ENCODE measurements at regions of chr12 and their contacts with region 1.

Region 1: GRCh38 chr12:75480469-75480949 is at the start of gene GLIPR1:
- DNase-seq: peak; percentile 83
- ATAC-seq: peak; percentile 83
- H3K4me3 Mint-ChIP-seq: peak within 1 kb of the TSS; percentile 91
- H3K27ac Mint-ChIP-seq: peak within 1 kb of the TSS; percentile 100
- H3K4me1 Mint-ChIP-seq: peaks cover 71% of the 10 kb centered on the region
- H3K27me3 Mint-ChIP-seq: no peaks in the 10 kb centered on the region
- total RNA-seq, gene GLIPR1: 30.5 to 33.0 TPM

Region 2: GRCh38 chr12:75334384-75335030 is 146.0 kb before region 1 on chr12 and contains the start of gene GLIPR1L1:
- CTCF ChIA-PET with region 1: interaction called, 58 read pairs
- POLR2A ChIA-PET with region 1: no interaction called
- DNase-seq: peak; percentile 88
- ATAC-seq: peak; percentile 83
- H3K4me3 Mint-ChIP-seq: peak within 1 kb of the TSS; percentile 56
- H3K27ac Mint-ChIP-seq: no peak within 1 kb of the TSS
- H3K4me1 Mint-ChIP-seq: peaks cover 33% of the 10 kb centered on the region
- H3K27me3 Mint-ChIP-seq: peaks cover 26% of the 10 kb centered on the region
- total RNA-seq, gene GLIPR1L1: not detected

Region 3: GRCh38 chr12:75437564-75437963 is 42.9 kb before region 1 on chr12:
- CTCF ChIA-PET with region 1: interaction called, 29 read pairs
- POLR2A ChIA-PET with region 1: no interaction called
- DNase-seq: peak; percentile 26
- ATAC-seq: peak; percentile 67
- H3K4me3 Mint-ChIP-seq: no peak overlapping the region
- H3K27ac Mint-ChIP-seq: no peak overlapping the region
- H3K4me1 Mint-ChIP-seq: peaks cover 14% of the 10 kb centered on the region
- H3K27me3 Mint-ChIP-seq: no peaks in the 10 kb centered on the region

Region 4: GRCh38 chr12:75505706-75506312 is 25.3 kb after region 1 on chr12:
- CTCF ChIA-PET with region 1: interaction called, 62 read pairs
- POLR2A ChIA-PET with region 1: interaction called, 24 read pairs
- DNase-seq: no peak
- ATAC-seq: no peak
- H3K4me3 Mint-ChIP-seq: no peak overlapping the region
- H3K27ac Mint-ChIP-seq: no peak overlapping the region
- H3K4me1 Mint-ChIP-seq: peaks cover 26% of the 10 kb centered on the region
- H3K27me3 Mint-ChIP-seq: no peaks in the 10 kb centered on the region

Region 5: DNA sequence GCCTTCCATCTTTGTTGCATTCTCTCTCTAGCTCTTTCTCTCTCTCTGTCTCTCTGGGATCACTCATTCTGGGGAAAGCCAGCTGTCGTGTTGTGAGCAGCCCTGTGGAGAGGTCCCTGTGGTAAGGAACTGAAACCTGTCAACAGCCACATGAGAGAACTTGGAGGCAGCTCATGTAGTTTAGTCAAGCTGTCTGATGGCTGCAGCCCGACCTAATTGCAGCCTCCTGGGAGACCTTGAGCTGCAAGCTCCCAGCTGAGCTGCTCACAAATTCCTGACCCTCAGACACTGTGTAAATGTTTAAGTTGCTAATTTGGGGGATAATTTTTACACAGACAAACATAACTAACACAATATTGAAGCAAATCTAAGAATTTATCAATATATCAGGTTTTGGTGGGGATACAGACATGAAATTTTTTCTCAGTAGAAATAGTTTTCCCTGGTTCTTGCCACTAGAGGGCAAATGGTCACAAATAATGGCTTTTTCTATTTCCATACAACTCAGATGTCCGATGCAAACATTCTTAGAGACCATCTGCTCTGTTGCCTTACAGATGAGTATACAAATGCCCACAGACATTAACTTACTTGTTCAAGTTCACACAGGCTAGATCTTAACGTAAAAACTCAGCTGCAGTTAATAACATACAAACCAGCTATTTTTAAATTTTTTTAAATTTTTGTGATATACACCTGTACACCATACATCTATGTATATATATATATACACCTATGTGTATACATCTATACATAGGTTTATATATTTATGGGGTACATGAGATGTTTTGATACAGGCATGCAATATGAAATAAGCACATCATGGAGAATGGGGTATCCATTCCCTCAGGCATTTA is 46.4 kb after region 1 on chr12:
- CTCF ChIA-PET with region 1: interaction called, 13 read pairs
- POLR2A ChIA-PET with region 1: interaction called, 3 read pairs
- DNase-seq: peak; percentile 30
- ATAC-seq: peak; percentile 87
- H3K4me3 Mint-ChIP-seq: no peak overlapping the region
- H3K27ac Mint-ChIP-seq: no peak overlapping the region
- H3K4me1 Mint-ChIP-seq: peaks cover 7% of the 10 kb centered on the region
- H3K27me3 Mint-ChIP-seq: peaks cover 22% of the 10 kb centered on the region

Measured in activated CD8-positive, alpha-beta T cell treated with anti-CD3 and anti-CD28 coated beads, Interleukin-2, amount 10 ng/mL, durations not matched to agents 7 days and 5 days (primary cell).